ENCODE measurements at regions of chr9 and their contacts with region 1.

Region 1: DNA sequence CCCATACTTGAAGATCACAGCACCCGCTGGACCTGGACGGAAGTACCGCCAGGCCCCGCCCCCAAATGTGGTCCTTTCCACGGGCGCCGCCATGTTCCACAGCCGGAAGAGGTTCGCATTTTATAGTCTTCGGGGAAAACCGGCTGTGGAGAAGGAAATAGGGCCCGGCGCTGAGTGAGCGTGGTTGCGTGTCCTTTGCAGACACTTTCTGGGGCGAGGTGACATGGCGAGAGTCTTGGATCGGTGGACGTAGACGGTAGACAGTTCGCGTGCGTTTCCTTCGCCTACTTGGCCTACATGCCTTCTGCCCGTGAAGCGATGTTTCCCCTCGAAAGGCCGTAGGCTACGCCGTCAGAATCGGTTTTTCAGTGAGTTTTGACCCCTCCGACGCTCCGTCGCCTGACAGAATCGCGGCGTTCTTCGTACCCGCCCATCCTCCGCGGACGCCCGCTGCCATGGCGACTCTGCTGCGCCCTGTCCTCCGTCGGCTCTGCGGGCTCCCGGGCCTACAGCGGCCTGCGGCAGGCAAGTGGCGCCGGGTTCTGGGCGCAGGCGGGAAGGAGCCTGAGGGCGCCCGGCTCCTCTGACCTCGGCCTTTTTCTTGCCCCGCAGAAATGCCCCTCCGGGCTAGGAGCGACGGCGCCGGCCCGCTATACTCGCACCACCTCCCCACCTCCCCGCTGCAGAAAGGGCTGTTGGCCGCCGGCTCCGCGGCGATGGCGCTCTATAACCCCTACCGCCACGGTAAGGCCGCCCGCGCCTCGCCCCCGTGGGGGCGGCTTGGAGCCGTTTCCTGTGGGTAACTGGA is at the starts of genes COQ4 and TRUB2:
- DNase-seq: peak; percentile 90
- H3K4me3 Mint-ChIP-seq: peak within 1 kb of the TSS; percentile 99
- H3K27ac Mint-ChIP-seq: peak within 1 kb of the TSS; percentile 99
- H3K4me1 Mint-ChIP-seq: peaks cover 11% of the 10 kb centered on the region
- H3K27me3 Mint-ChIP-seq: no peaks in the 10 kb centered on the region
- total RNA-seq, gene COQ4: 49.6 and 52.2 TPM in 2 replicates
- total RNA-seq, gene TRUB2: 33.5 and 36.1 TPM in 2 replicates

Region 2: DNA sequence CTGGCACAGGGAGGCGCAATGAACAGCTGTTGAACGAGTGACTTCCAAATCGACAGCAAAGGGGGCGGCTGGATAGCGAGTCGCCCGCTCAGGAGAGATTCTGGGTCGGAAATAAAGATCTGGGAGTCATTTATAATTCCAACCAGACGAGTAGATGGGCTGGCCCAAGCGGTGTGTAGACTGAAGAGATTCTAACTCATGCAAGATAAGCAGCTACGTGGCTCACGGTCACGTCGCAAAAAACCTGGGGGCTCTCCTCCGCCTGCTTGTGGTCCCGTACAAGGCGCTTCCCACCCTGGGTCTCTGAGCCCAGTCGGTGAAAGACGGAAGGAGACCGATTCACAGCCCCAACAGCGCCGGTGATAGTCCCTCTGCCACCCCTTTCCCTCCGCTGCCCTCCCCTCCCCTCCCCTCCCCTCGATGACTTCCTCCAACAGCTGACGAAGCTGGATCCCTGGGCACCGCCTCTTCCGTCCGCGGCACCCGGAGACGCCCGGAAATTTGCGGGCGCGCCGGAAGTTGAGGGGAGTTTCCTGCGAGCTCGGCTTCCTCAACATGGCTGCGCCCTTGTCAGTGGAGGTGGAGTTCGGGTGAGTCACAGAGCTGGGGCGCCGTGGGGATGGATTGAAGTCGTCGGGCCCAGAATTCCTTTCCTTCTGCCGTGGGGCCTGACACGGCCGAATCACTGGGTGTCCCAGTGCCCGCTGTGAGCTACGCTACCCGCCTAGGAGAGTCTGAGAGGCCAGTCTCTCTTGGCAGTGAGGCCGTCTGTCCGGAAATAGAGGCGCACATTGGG is 48.4 kb after region 1 on chr9 and contains the start of gene URM1:
- intact Hi-C with region 1: loop called (anchors 1 kb)
- DNase-seq: peak; percentile 96
- H3K4me3 Mint-ChIP-seq: peak within 1 kb of the TSS; percentile 95
- H3K27ac Mint-ChIP-seq: peak within 1 kb of the TSS; percentile 82
- H3K4me1 Mint-ChIP-seq: peaks cover 29% of the 10 kb centered on the region
- H3K27me3 Mint-ChIP-seq: no peaks in the 10 kb centered on the region
- total RNA-seq, gene URM1: 78.6 and 78.7 TPM in 2 replicates